CD8-positive, alpha-beta memory T cell (primary cell): ENCODE measurements at regions of chr6 and their contacts with region 1.

Region 1: DNA sequence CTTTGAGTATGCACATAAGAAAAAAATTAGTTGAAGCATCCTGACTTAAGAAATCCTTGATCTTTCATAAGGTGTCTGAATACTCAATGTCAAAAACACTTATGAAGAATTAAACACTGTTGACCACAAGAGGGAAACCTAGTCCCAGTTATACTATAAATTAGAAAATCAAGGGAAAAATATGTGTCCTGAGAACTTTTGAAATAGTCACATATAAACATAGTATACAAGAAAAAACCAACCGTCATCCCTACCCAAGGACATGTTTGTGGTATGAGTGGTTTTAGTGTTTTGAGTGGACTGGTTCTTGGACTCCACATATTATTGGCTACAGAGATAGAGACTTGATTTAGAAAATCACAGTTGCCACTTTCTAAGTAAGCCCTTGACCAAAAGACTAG is 7.6 kb upstream of the HLA-DRA start:
- DNase-seq: peak in 2 of 5 donors; percentile 10 to 15
- H3K4me3 ChIP-seq: no peak overlapping the region
- H3K4me3 Mint-ChIP-seq: no peak overlapping the region
- H3K27ac ChIP-seq: no peak overlapping the region
- H3K27ac Mint-ChIP-seq: no peak overlapping the region
- H3K4me1 ChIP-seq: no peaks in the 10 kb centered on the region
- H3K4me1 Mint-ChIP-seq: no peaks in the 10 kb centered on the region
- H3K27me3 ChIP-seq: peaks cover 3% of the 10 kb centered on the region
- H3K27me3 Mint-ChIP-seq: peaks cover 2 to 15% of the 10 kb centered on the region in 2 donors

Region 2: GRCh38 chr6:32195652-32195901 is 236.5 kb before region 1 on chr6:
- CTCF ChIA-PET with region 1: no interaction called
- POLR2A ChIA-PET with region 1: no interaction called
- DNase-seq: peak; percentile 99 to 100 (median 100)
- H3K4me3 ChIP-seq: peak overlapping the region; percentile 78
- H3K4me3 Mint-ChIP-seq: peak overlapping the region; percentile 92 to 100 (median 96)
- H3K27ac ChIP-seq: peak overlapping the region; percentile 99
- H3K27ac Mint-ChIP-seq: peak overlapping the region; percentile 98 to 100 (median 100)
- H3K4me1 ChIP-seq: peaks cover 34% of the 10 kb centered on the region
- H3K4me1 Mint-ChIP-seq: peaks cover 31 to 46% (median 33%) of the 10 kb centered on the region in 3 donors
- H3K27me3 ChIP-seq: no peaks in the 10 kb centered on the region
- H3K27me3 Mint-ChIP-seq: peaks cover 2 to 6% of the 10 kb centered on the region in 2 donors

Region 3: GRCh38 chr6:32692019-32692418 is 260.0 kb after region 1 on chr6:
- CTCF ChIA-PET with region 1: interaction called, 16 read pairs
- POLR2A ChIA-PET with region 1: no interaction called
- DNase-seq: peak in 4 of 5 donors; percentile 24 to 80 (median 54)
- H3K4me3 ChIP-seq: no peak overlapping the region
- H3K4me3 Mint-ChIP-seq: no peak overlapping the region
- H3K27ac ChIP-seq: no peak overlapping the region
- H3K27ac Mint-ChIP-seq: peak overlapping the region in 1 of 8 donors; percentile 46
- H3K4me1 ChIP-seq: peaks cover 8% of the 10 kb centered on the region
- H3K4me1 Mint-ChIP-seq: peaks cover 9 to 23% (median 11%) of the 10 kb centered on the region in 3 donors
- H3K27me3 ChIP-seq: no peaks in the 10 kb centered on the region
- H3K27me3 Mint-ChIP-seq: peaks cover 16 to 32% of the 10 kb centered on the region in 2 donors

Region 4: DNA sequence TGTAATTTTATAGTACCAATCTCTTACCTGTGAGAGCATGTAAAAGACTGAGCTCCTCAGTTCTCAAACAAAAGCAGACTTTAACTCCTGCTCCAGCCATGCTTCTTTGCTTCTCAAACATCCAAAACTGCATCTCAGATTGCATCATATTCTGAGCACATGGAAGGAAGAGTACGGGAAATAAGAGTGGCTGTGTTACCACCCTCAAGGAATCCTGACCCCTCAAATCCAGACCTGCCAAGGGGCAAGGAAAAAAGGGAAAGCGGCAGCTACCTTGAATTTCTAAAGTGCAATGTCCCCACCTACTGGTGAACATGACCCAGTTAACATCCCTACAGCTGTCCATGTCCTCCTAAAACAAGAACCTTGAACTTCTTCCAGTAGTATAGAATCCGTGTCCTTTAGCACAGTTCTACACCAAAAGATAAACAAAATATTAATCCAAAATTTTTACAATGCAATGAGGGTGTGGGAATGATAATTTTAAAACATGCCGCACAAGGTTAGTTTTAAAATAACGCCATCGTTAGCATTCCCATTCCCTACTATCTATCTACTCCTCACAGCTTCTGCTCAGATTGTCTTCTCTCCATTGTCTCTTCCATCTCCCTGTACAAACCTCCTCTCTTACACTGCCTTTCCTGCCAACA is 268.5 kb after region 1 on chr6:
- CTCF ChIA-PET with region 1: interaction called, 27 read pairs
- POLR2A ChIA-PET with region 1: no interaction called
- DNase-seq: peak in 3 of 5 donors; percentile 23 to 53 (median 31)
- H3K4me3 ChIP-seq: no peak overlapping the region
- H3K4me3 Mint-ChIP-seq: no peak overlapping the region
- H3K27ac ChIP-seq: no peak overlapping the region
- H3K27ac Mint-ChIP-seq: peak overlapping the region in 2 of 8 donors; percentile 2 to 16
- H3K4me1 ChIP-seq: no peaks in the 10 kb centered on the region
- H3K4me1 Mint-ChIP-seq: peaks cover 0 to 23% (median 4%) of the 10 kb centered on the region in 3 donors
- H3K27me3 ChIP-seq: no peaks in the 10 kb centered on the region
- H3K27me3 Mint-ChIP-seq: peaks cover 35 to 53% of the 10 kb centered on the region in 2 donors